A549 (cell line): ENCODE measurements at regions of chr5 and their contacts with region 1.

Region 1: GRCh38 chr5:39376293-39376714 is 12.0 kb upstream of the C9 start:
- DNase-seq: peak; percentile 65 to 67
- ATAC-seq: peak; percentile 85 to 95; a peak in 5 of 6 replicates
- H3K4me3 ChIP-seq: no peak overlapping the region
- H3K27ac ChIP-seq: no peak overlapping the region; a peak in 1 of 6 replicates
- H3K4me1 ChIP-seq: no peaks in the 10 kb centered on the region
- CTCF ChIP-seq: peak; percentile 95
- EP300 ChIP-seq: no peak
- POLR2A ChIP-seq: no peak
- RAD21 ChIP-seq: peak; percentile 96 to 97

Region 2: GRCh38 chr5:39256477-39257235 is 119.6 kb before region 1 on chr5:
- CTCF ChIA-PET with region 1: no interaction called
- POLR2A ChIA-PET with region 1: no interaction called
- DNase-seq: peak; percentile 67 to 72
- ATAC-seq: peak; percentile 93
- H3K4me3 ChIP-seq: peak overlapping the region; percentile 32
- H3K27ac ChIP-seq: peak overlapping the region; percentile 58 to 82
- H3K4me1 ChIP-seq: peaks cover 33% of the 10 kb centered on the region
- CTCF ChIP-seq: no peak
- EP300 ChIP-seq: 0 out of 5 replicates have a peak, but pooled peaks of 1 of the 2 experiments have one; percentile 19
- POLR2A ChIP-seq: no peak
- RAD21 ChIP-seq: no peak

Region 3: GRCh38 chr5:39355324-39355723 is 21.0 kb before region 1 on chr5:
- CTCF ChIA-PET with region 1: interaction called, 10 read pairs
- POLR2A ChIA-PET with region 1: no interaction called
- DNase-seq: peak in 1 of 2 experiments; percentile 1
- ATAC-seq: no peak
- H3K4me3 ChIP-seq: no peak overlapping the region
- H3K27ac ChIP-seq: no peak overlapping the region
- H3K4me1 ChIP-seq: no peaks in the 10 kb centered on the region
- CTCF ChIP-seq: no peak
- EP300 ChIP-seq: no peak
- POLR2A ChIP-seq: no peak
- RAD21 ChIP-seq: no peak

Region 4: GRCh38 chr5:39399135-39400036 is 23.1 kb after region 1 on chr5:
- CTCF ChIA-PET with region 1: interaction called, 30 read pairs
- POLR2A ChIA-PET with region 1: no interaction called
- DNase-seq: peak; percentile 62 to 89
- ATAC-seq: peak; percentile 96 to 99
- H3K4me3 ChIP-seq: no peak overlapping the region
- H3K27ac ChIP-seq: peak overlapping the region; percentile 75 to 88
- H3K4me1 ChIP-seq: peaks cover 48% of the 10 kb centered on the region
- CTCF ChIP-seq: no peak
- EP300 ChIP-seq: peak; percentile 65; a peak in 2 of 5 replicates
- POLR2A ChIP-seq: no peak
- RAD21 ChIP-seq: peak in 1 of 2 experiments; percentile 50; a peak in 2 of 5 replicates

Region 5: GRCh38 chr5:39501397-39501796 is 125.1 kb after region 1 on chr5:
- CTCF ChIA-PET with region 1: interaction called, 19 read pairs
- POLR2A ChIA-PET with region 1: no interaction called
- DNase-seq: peak in 1 of 2 experiments; percentile 32
- ATAC-seq: peak; percentile 62 to 71; a peak in 4 of 6 replicates
- H3K4me3 ChIP-seq: no peak overlapping the region
- H3K27ac ChIP-seq: peak overlapping the region; percentile 55 to 74
- H3K4me1 ChIP-seq: peaks cover 30% of the 10 kb centered on the region
- CTCF ChIP-seq: no peak
- EP300 ChIP-seq: no peak
- POLR2A ChIP-seq: no peak
- RAD21 ChIP-seq: no peak

Region 6: DNA sequence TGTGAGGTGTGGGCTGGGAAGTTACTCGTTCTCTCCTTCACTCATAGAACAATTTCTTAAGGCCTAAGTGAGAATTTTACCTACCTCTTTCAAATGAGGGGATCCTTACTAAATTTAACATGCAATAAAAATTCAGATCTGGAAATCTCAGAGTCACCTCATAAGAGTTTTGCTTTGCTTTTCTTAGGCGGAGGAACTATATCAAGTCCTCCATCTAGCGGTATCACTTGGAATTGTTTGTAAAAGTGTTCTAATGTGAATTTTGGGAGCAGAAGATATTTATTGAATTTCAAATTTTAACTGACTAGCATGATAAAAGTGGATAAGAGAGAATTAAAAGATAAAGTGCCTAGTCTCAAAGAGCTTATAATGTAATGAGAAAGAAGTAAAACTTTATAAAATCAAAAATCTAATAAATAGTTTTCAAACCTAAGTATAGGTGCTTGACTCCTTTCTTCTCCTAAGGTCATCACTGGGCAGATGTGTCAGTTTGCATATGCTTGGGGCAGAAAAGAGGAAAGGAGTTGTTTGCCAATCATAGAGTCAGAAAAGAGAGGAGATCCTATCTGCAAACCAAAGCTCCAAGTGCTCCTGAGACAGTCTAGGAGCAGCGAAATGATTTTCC is 194.2 kb after region 1 on chr5:
- CTCF ChIA-PET with region 1: interaction called, 128 read pairs
- POLR2A ChIA-PET with region 1: no interaction called
- DNase-seq: peak; percentile 10 to 50
- ATAC-seq: peak; percentile 59 to 65; a peak in 3 of 6 replicates
- H3K4me3 ChIP-seq: no peak overlapping the region
- H3K27ac ChIP-seq: peak overlapping the region in 1 of 2 experiments; percentile 56; a peak in 3 of 6 replicates
- H3K4me1 ChIP-seq: peaks cover 5% of the 10 kb centered on the region; the same call in 1 of the 3 replicates
- CTCF ChIP-seq: peak; percentile 80
- EP300 ChIP-seq: no peak
- POLR2A ChIP-seq: no peak
- RAD21 ChIP-seq: peak; percentile 79 to 82